ENCODE measurements at regions of chr20 and their contacts with region 1.

Region 1: DNA sequence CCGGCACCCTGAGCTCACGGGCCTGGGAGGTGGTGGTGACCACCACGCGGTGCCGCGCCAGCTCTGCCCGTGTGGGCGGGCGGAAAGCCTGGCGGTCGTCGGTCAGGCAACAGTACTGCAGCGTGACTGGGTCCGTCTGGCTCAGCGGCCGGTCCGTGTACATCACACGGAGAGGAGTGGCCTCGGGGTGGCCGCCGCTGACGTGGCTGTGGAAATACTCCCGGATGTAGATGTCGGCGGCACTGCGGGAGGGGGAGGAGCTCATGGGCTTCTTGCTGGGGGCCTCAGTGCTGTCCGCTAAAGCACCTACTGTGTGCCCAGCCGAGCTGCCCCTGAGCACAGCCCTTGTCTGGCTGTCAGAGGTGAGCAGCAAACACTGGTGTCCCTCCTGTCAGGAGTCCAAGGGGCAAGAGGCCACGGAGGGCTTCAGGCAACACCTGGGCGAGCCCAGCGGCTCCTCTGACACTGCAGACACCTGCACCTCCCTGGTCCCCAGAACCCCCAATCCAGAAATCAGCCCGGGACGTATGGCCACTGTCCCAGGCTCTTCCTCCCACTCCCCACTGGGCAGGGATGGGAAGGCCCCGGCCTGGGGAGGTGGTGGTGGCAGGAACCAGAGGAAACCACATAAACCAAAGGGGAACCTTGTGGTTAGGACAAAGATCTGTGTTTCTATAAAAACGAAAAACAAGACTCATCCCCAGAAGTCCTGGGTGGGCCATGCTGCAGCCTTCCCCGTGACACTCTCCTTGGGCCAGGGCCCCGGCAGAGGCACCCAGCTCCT is 6.5 kb downstream of the HELZ2 start:
- DNase-seq: peak in 9 of 10 donors; percentile 19 to 74 (median 45)
- ATAC-seq: peak; percentile 68 to 72
- H3K4me3 Mint-ChIP-seq: peak overlapping the region; percentile 68 to 89 (median 82)
- H3K27ac Mint-ChIP-seq: peak overlapping the region in 8 of 10 donors; percentile 18 to 70 (median 42)
- H3K4me1 Mint-ChIP-seq: peaks cover 9 to 32% (median 28%) of the 10 kb centered on the region in 4 donors
- H3K27me3 Mint-ChIP-seq: no peaks in the 10 kb centered on the region

Region 2: DNA sequence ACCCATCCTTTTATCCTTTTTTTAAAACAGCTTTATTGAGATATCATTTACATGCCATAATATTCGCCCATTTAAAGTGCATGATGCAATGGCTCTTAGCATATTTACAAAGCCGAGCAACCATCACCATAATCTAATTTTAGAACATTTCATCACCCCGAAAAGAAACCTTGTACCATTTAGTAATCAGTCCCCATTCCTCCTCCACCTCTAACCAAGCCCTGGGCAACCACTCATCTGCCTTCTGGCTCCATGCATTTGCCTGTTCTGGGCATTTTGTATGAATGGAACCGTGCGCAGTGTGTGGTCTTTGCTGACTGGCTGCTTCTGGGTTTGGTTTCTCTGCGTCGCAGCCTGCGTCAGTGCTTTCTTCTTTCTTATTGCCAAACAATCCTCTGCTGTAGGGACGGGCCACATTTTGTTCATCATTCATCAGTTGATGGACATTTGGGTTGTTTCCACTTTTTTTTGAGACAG is 58.5 kb before region 1 on chr20:
- POLR2A ChIA-PET with region 1: no interaction called
- DNase-seq: no peak
- ATAC-seq: no peak
- H3K4me3 Mint-ChIP-seq: no peak overlapping the region
- H3K27ac Mint-ChIP-seq: no peak overlapping the region
- H3K4me1 Mint-ChIP-seq: no peaks in the 10 kb centered on the region
- H3K27me3 Mint-ChIP-seq: peaks cover 19 to 58% (median 34%) of the 10 kb centered on the region in 5 donors

Region 3: DNA sequence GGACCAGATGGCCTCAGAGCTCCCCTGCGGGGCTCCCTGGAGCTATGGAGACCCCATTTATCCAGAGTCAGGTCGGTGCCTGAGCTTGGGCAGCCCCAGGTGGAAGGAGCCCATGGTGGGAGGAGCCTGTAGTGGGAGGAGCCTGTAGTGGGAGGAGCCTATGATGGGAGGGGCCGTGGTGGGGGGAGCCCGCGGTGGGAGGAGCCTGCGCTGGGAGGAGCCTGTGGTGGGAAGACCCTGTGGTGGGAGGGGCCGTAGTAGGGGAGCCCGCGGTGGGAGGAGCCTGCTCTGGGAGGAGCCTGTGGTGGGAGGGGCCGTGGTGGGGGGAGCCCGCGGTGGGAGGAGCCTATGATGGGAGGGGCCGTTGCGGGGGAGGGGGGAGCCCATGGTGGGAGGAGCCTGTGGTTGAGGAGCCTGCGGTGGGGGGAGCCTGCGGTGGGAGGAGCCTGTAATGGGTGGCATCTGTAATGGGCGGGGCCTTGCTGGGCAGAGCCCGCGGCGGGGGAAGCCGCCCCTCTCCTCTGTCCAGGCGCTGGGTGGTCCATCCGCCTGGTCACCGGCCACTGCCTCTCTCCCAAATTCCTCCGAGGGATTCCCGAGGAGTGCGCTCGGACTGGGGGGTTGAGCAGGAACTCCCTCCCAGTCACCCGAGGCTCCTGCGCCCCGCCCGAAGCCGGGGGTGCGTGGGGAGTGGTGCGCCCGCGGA is 14.2 kb before region 1 on chr20:
- POLR2A ChIA-PET with region 1: interaction called, 37 read pairs
- DNase-seq: peak; percentile 78 to 94 (median 88)
- ATAC-seq: peak; percentile 69 to 73
- H3K4me3 Mint-ChIP-seq: peak overlapping the region; percentile 67 to 85 (median 79)
- H3K27ac Mint-ChIP-seq: peak overlapping the region in 9 of 10 donors; percentile 77 to 97 (median 91)
- H3K4me1 Mint-ChIP-seq: peaks cover 11 to 34% (median 28%) of the 10 kb centered on the region in 4 donors
- H3K27me3 Mint-ChIP-seq: peaks cover 0 to 13% (median 2%) of the 10 kb centered on the region in 5 donors